ENCODE measurements at regions of chr19 and their contacts with region 1.

Region 1: DNA sequence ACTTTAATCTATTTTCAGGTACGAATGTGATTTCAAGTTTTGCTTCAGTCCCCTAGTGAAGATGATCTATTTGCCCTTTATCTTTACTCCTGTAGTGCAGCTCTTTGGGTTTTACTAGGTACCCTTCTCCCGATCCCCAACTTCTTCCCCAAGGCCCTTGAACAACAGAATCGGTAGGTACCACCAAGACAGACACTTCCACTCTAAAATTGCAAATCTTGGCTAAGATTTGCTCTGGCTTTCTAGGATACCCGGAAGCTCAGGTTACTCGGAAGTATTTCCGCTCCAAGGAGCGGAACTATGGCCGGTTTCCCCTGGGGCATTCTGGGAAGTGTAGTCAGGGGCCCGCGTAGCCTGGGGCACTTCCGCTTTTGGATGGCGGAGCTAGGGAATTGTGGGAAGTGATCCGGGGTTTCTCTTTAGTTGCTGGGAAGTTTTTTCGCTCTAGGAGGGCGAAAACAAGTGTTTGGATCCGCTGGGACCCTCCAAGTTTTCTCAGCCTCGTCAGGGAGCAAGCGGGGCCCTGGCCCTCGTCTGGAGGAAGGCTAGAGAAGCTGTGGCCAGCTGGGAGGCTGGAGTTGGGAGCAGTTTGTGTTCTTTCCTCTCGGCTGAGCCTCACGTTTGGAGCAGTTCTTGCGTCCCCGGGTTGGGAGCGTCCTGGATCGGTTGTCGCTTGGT is 5.1 kb upstream of the ZNF227 start:
- DNase-seq: peak; percentile 90
- ATAC-seq: peak; percentile 96

Region 2: DNA sequence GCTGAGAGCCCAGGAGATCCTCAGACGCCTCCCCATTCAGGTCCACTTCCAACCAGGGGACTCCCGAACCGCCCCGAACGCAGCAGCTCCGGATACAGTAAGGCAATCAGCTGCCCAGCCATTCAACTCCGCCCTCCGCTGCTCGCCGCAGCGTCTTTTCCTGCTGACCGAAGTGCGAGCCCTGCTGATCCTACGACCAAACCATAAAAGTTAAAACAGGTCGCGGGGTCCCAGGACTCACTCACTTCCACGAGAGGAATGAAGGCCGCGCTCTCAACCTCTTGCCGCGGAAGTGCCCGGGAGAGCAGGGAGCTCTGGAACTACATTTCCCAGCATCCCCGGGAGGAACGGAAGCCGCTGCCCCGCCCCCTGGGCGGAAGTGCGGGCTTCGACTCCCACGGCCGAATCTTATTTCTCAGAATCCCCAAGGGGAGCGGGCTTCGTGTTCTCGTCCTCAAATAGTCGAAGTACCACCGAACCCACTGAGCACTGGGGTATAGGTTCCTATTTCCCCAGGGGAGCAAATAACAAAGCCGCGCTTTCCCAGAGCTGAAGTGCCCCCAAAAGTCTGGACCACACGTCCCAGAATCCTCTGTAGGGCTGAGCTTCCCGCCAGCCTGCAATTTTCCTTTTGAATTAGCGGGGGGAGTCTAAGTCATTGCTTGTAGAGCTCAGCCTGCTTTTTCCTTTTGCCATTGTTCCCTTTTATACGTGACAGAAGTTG is 272.1 kb before region 1 on chr19 and contains the start of gene ZNF45:
- intact Hi-C with region 1: loop called (anchors 5 kb)
- DNase-seq: peak; percentile 94
- ATAC-seq: peak; percentile 98
- total RNA-seq, gene ZNF45: 7.8 TPM

Region 3: DNA sequence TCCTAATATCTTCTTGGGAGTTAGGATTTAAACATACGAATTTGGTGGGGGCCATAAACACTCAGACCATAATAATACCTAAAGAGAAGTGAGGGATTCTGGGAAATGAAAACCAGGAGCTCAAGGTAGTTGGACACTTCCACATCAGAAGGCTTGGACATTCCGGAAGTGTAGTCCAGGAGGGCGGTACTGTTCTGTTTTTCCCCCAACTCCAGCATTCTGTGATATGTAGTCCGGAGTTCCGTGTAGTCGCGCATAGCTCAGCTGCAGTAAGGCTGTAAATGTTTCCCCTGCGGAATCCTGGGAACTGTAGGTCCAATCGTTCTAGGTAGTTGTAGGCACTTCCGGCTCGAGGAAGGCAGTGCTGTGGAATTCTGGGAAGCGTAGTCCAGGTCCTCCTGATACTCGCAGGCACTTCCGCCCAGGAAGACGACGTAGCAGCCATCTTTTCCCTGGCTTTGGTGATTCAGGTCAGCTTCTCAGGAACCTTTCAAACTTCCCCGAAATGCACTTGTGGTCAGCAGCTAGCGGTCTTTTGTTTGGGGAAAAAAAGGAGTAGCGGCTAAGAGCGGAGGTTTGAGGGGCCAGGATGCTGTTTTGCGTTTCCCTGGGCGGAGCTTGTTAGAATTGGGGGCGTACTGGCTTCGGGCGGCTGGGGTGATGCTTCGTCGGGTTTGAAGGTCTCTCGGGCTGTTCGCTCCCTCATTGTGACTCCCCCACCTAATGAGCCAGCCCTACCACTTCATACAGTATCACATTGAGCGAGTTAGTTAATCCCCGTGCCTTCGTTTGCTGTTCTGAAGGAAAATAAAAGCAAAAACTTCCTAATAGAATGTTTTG is 42.4 kb before region 1 on chr19 and contains the start of gene ZNF226:
- intact Hi-C with region 1: loop called (anchors 2 kb)
- DNase-seq: peak; percentile 89
- ATAC-seq: peak; percentile 99
- total RNA-seq, gene ZNF226: 15.7 TPM

Region 4: GRCh38 chr19:44500148-44500956 is 293.1 kb after region 1 on chr19 and contains the start of gene ZNF180:
- intact Hi-C with region 1: loop called (anchors 5 kb)
- DNase-seq: peak; percentile 98
- ATAC-seq: peak; percentile 97
- total RNA-seq, gene ZNF180: 4.5 TPM

Measured in Right ventricle myocardium inferior (tissue), 1 donor.